Gastrocnemius medialis (tissue), 4 donors: ENCODE measurements at regions of chr11 and their contacts with region 1.

Region 1: DNA sequence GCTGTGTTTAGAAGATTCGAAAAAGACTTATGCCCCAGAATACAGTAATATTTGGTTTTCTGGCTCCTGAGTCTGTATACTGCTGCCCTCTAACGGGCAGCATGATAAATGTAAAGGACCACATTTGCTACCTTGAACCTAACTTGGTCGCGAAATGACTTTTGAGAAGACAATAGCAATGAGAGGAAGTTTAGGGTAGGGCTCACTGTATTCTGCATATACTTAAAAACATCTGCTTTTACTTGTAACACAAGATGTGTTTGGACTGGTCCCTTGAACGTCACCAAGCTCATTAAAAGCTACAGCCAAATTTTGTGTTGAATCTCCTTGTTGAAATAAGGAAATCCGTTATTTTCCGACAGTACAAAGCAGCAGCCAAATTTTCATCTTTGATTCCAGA is 309.1 kb downstream of the SWAP70 start:
- DNase-seq: no peak
- ATAC-seq: peak; percentile 57 to 73
- H3K4me3 ChIP-seq: no peak overlapping the region
- H3K27ac ChIP-seq: no peak overlapping the region
- H3K4me1 ChIP-seq: peaks cover 15 to 17% of the 10 kb centered on the region in 2 donors
- H3K27me3 ChIP-seq: no peaks in the 10 kb centered on the region
- CTCF ChIP-seq: peak; percentile 43 to 65 (median 61)
- POLR2A ChIP-seq: no peak

Region 2: DNA sequence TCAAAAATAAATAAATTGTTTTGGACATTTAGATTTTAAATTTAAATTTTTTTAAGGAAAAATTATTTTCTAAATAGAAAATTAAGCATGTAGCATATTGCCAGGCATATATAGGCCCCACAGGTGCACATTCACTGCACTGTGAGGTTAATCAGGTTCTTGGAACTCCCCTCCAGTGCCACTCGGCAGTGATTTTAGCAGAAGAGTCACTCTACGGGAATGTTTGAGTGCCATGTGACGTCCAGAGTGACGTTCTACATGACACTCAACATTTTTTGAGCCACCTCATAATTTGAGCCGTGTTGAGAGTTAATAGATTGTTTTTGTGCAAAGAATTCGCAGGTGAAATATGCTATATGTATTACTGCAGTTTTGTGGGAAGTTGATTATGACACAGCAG is 231.7 kb before region 1 on chr11:
- in situ Hi-C with region 1: no loop called
- intact Hi-C with region 1: no loop called
- DNase-seq: no peak
- ATAC-seq: no peak
- H3K4me3 ChIP-seq: no peak overlapping the region
- H3K27ac ChIP-seq: no peak overlapping the region
- H3K4me1 ChIP-seq: no peaks in the 10 kb centered on the region
- H3K27me3 ChIP-seq: no peaks in the 10 kb centered on the region
- CTCF ChIP-seq: no peak
- POLR2A ChIP-seq: no peak

Region 3: GRCh38 chr11:9861860-9862725 is 110.9 kb before region 1 on chr11:
- in situ Hi-C with region 1: loop called in 1 of 4 experiments (anchors 5 kb)
- intact Hi-C with region 1: loop called (anchors 2 kb)
- DNase-seq: peak; percentile 6 to 36
- ATAC-seq: peak; percentile 75 to 87
- H3K4me3 ChIP-seq: no peak overlapping the region
- H3K27ac ChIP-seq: no peak overlapping the region
- H3K4me1 ChIP-seq: no peaks in the 10 kb centered on the region
- H3K27me3 ChIP-seq: no peaks in the 10 kb centered on the region
- CTCF ChIP-seq: peak; percentile 50 to 74 (median 57)
- POLR2A ChIP-seq: no peak

Region 4: DNA sequence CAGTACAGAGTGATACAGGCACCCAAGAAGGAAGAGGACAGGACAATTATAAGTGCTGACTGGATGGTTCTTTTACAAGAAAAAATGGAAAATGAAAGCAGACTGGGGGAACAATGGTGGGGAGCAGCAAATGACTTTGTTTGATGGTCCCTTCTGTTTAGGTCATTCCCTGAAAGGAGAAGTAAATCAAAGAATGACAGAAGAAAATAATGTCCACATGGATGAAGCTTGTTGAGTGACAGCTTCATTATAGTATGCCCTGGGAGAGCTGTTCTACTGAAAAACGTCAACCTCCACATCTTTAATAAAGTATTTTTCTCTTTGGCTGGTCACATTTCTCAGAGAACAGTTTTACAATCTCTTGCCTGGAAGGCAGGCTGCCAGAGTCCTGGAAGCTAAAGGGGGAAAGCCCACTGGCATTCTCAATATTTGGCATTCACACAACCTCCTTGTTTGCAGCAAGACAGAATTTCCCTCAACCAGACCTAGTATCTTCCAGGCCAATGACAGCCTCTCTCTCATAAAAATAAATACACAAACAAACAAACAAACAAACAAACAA is 21.2 kb before region 1 on chr11:
- in situ Hi-C with region 1: no loop called
- intact Hi-C with region 1: no loop called
- DNase-seq: no peak
- ATAC-seq: no peak
- H3K4me3 ChIP-seq: no peak overlapping the region
- H3K27ac ChIP-seq: peak overlapping the region in 3 of 4 donors; percentile 2 to 29 (median 8)
- H3K4me1 ChIP-seq: no peaks in the 10 kb centered on the region
- H3K27me3 ChIP-seq: no peaks in the 10 kb centered on the region
- CTCF ChIP-seq: no peak
- POLR2A ChIP-seq: no peak